ENCODE measurements at regions of chrX and their contacts with region 1.

Region 1: DNA sequence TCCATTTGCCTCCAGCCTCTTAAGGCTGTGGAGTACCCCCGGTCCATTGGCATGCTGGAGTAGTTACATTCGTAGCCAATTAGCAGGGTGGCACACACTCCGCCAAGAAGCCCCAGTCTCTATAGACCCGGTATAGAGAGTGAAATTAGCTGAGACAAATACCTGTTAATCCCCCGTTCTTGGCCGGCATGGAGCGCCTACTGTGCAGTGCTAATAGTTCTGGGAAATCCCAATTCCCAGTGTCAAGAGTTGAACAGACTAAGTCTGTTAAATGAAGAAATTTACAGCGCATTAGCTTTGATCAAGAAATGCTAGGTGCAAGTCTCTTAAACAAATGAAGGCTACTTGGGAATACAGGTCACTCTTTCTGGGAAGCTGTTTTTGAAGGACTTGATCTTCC is 127.8 kb upstream of the ARX start:
- DNase-seq: no peak
- H3K4me3 ChIP-seq: no peak overlapping the region
- H3K27ac ChIP-seq: no peak overlapping the region
- H3K4me1 ChIP-seq: peaks cover 0 to 5% (median 0%) of the 10 kb centered on the region in 4 donors
- H3K27me3 ChIP-seq: no peaks in the 10 kb centered on the region
- CTCF ChIP-seq: no peak
- EP300 ChIP-seq: no peak
- POLR2A ChIP-seq: no peak

Region 2: DNA sequence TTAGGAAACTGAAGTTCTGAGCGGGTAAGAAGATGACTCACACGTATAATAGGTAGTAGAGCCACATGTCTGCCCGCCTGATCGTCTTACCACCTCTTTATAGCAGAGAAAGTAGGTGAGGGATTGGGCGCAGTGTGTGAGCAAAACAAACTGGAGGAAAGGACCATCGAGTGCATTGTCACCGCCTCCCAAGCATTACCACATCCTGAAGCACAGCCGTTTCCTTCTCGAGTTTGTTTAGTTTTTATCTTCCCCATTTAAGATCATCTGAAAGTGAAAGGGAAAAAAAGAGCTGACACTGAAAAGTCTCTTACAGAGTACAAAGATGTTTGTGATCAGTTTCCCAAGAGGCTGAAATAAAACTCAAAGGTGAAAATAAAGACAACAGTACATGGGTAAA is 663.7 kb before region 1 on chrX:
- intact Hi-C with region 1: no loop called
- DNase-seq: no peak
- H3K4me3 ChIP-seq: peak overlapping the region in 1 of 4 donors; percentile 15
- H3K27ac ChIP-seq: peak overlapping the region in 1 of 4 donors; percentile 36
- H3K4me1 ChIP-seq: peaks cover 4 to 14% (median 7%) of the 10 kb centered on the region in 4 donors
- H3K27me3 ChIP-seq: no peaks in the 10 kb centered on the region
- CTCF ChIP-seq: no peak
- EP300 ChIP-seq: no peak
- POLR2A ChIP-seq: no peak

Region 3: DNA sequence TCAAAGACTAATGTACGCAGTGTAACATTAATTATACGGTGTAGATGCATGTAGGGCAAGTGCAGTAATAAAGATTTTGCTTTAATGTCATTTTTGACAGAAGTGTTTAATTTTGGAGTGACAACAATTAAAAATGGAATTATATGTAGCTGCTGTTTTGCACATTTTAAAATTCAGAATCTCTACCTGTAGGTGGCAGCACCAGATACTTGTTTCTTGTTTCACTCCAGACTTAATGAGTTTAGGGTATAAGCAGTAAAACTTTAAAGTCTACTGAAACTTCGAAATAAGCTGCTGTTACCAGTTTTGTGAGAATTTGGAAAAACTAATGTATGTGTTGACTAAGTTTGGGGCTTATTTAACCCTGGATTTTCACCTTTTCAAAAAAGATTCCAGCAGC is 305.0 kb before region 1 on chrX:
- intact Hi-C with region 1: loop called (anchors 2 kb)
- DNase-seq: no peak
- H3K4me3 ChIP-seq: no peak overlapping the region
- H3K27ac ChIP-seq: no peak overlapping the region
- H3K4me1 ChIP-seq: no peaks in the 10 kb centered on the region
- H3K27me3 ChIP-seq: no peaks in the 10 kb centered on the region
- CTCF ChIP-seq: peak in 2 of 3 experiments; percentile 50 to 60
- EP300 ChIP-seq: no peak
- POLR2A ChIP-seq: no peak